ENCODE measurements at regions of chr2 and their contacts with region 1.

Region 1: DNA sequence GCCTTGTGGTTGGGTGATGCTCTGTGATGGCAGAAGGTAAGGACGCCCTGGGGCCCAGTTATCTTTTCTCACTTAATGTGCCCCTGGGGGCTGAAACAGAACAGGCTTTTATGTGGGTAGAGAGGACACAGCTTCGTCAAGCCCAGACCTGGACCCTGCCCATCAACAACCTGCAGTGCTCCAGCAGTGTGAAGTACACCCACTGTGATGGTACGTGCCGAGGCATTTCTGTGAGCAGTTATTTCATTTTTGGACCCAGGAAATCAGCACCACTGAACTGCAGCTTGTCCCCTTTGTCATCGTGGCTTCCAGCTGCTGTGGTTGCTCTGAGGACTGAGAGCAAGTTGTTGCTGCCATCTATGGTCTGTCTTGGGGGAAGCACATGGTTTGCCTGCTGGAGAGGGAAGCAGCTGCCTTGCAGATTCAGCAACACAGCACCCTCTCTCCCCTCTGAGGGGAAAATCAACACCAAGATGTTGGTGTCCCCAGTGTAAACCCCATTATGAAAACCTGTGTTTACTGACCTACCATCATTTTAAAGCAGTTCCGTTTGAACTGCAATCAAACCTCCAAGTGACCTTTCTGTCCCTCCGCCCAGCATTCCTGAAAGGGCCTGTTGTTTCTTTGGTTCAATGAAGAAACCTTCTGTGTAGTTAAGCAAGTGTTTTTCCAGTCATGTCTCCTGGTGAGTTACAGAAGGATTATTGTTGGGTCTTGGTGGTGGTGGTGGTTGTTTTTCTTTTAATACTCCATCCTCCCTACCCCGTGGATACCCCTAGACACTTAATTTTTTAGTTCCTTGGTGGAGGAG is 158.2 kb downstream of the MGAT5 start:
- DNase-seq: peak; percentile 18 to 67
- ATAC-seq: peak; percentile 96 to 98
- H3K4me3 ChIP-seq: no peak overlapping the region
- H3K27ac ChIP-seq: no peak overlapping the region
- H3K4me1 ChIP-seq: 0 out of 3 replicates have a peak, but pooled peaks cover 4% of the 10 kb centered on the region
- CTCF ChIP-seq: peak; percentile 59
- EP300 ChIP-seq: no peak
- POLR2A ChIP-seq: no peak
- RAD21 ChIP-seq: peak; percentile 74 to 77

Region 2: GRCh38 chr2:133504566-133505393 is 907.3 kb before region 1 on chr2:
- CTCF ChIA-PET with region 1: no interaction called
- POLR2A ChIA-PET with region 1: no interaction called
- DNase-seq: peak in 1 of 2 experiments; percentile 19
- ATAC-seq: no peak; a peak in 2 of 6 replicates
- H3K4me3 ChIP-seq: no peak overlapping the region
- H3K27ac ChIP-seq: peak overlapping the region in 1 of 2 experiments; percentile 60; a peak in 3 of 6 replicates
- H3K4me1 ChIP-seq: peaks cover 14% of the 10 kb centered on the region
- CTCF ChIP-seq: no peak
- EP300 ChIP-seq: no peak
- POLR2A ChIP-seq: no peak
- RAD21 ChIP-seq: no peak

Region 3: GRCh38 chr2:133886735-133887660 is 525.0 kb before region 1 on chr2:
- CTCF ChIA-PET with region 1: interaction called, 17 read pairs
- POLR2A ChIA-PET with region 1: no interaction called
- DNase-seq: peak; percentile 70 to 71
- ATAC-seq: peak; percentile 88 to 94
- H3K4me3 ChIP-seq: no peak overlapping the region
- H3K27ac ChIP-seq: no peak overlapping the region
- H3K4me1 ChIP-seq: peaks cover 4% of the 10 kb centered on the region; the same call in 1 of the 3 replicates
- CTCF ChIP-seq: peak; percentile 68
- EP300 ChIP-seq: no peak
- POLR2A ChIP-seq: no peak
- RAD21 ChIP-seq: peak; percentile 69 to 72